Activated CD4-positive, alpha-beta T cell treated with anti-CD3 and anti-CD28 coated beads, Interleukin-2, amount 10 ng/mL, durations not matched to agents 24 days and 14 days (primary cell): ENCODE measurements at regions of chr15 and their contacts with region 1.

Region 1: DNA sequence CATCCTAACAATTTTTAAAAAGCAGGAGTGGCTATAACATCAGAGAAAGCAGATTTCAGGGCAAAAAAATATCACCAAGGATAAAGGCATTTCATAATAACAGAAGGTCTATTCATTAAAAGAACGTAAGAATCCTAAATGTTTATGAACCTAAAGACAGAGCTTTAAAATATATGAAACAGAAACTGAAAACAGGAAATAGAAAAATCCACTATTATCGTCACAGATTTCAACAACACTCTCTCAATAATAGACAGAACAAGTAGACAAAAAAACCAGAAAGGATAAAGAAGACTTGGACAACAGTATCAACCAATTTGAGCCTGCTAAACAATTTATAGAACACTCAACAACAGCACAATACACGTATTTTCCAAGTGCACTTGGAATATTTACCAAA is 71.4 kb downstream of the FBXL22 start:
- DNase-seq: no peak
- H3K4me3 Mint-ChIP-seq: peak overlapping the region; percentile 80
- H3K27ac Mint-ChIP-seq: peak overlapping the region; percentile 81
- H3K4me1 Mint-ChIP-seq: peaks cover 43% of the 10 kb centered on the region
- H3K27me3 Mint-ChIP-seq: no peaks in the 10 kb centered on the region

Region 2: DNA sequence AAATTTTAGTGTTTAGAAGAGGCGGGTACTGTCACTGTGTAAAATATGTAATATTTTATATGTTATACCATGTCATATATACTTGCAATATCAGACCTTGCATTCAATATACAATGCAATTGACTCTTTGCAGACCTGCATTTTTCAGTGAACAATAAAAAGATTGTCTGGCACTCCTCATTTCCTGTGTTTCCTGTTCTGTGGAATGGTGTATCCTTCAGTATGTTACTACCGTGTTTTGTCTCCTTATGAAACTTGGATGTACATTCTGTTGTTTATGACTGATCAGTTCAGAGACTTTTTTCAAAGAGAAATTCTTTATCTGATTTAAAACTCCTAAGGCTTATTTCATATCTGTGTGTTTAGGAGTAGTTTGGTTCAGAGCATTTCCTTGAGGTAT is 359.7 kb before region 1 on chr15:
- intact Hi-C with region 1: no loop called
- DNase-seq: no peak
- H3K4me3 Mint-ChIP-seq: no peak overlapping the region
- H3K27ac Mint-ChIP-seq: no peak overlapping the region
- H3K4me1 Mint-ChIP-seq: no peaks in the 10 kb centered on the region
- H3K27me3 Mint-ChIP-seq: peaks cover 5% of the 10 kb centered on the region

Region 3: GRCh38 chr15:63466378-63467192 is 202.0 kb before region 1 on chr15:
- intact Hi-C with region 1: loop called (anchors 5 kb)
- DNase-seq: peak; percentile 91
- H3K4me3 Mint-ChIP-seq: no peak overlapping the region
- H3K27ac Mint-ChIP-seq: no peak overlapping the region
- H3K4me1 Mint-ChIP-seq: peaks cover 23% of the 10 kb centered on the region
- H3K27me3 Mint-ChIP-seq: peaks cover 13% of the 10 kb centered on the region

Region 4: DNA sequence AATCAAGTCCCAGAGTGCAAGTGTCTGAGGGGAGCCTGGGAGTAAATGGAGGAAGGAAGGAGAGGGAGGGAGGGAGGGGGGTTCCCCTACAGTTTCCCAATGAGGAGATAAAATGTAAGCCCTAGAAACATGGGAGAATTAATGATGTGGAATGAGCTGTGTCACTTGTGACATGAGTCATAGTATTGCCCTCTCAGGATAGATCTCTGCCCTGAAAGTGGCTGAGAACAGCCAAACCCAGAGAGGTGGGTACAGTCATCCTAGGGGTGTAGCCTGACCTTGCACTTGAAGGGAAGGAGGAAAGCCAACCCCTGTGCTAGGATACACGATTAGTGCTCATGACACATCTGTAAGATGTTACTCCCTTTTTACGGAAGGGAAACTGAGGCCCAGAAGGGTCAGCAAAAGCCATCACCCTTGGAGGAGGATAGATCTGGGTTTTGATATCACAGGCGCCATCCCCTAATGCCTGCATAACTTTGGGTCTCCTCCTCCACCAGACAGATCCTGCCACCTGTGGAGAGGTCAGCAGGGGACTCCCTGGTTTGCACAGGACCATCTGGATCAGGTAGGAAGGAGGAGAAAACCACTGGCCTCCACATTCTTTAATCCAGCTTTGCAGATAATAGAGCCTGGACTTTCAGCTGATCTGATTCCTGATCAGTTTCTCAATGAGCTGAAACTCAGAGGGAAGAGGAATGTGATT is 187.3 kb before region 1 on chr15:
- intact Hi-C with region 1: loop called (anchors 5 kb)
- DNase-seq: no peak
- H3K4me3 Mint-ChIP-seq: peak overlapping the region; percentile 26
- H3K27ac Mint-ChIP-seq: peak overlapping the region; percentile 97
- H3K4me1 Mint-ChIP-seq: peaks cover 61% of the 10 kb centered on the region
- H3K27me3 Mint-ChIP-seq: no peaks in the 10 kb centered on the region

Region 5: GRCh38 chr15:63610200-63610841 is 58.3 kb before region 1 on chr15:
- intact Hi-C with region 1: loop called (anchors 5 kb)
- DNase-seq: peak; percentile 93
- H3K4me3 Mint-ChIP-seq: peak overlapping the region; percentile 32
- H3K27ac Mint-ChIP-seq: peak overlapping the region; percentile 92
- H3K4me1 Mint-ChIP-seq: peaks cover 27% of the 10 kb centered on the region
- H3K27me3 Mint-ChIP-seq: no peaks in the 10 kb centered on the region

Region 6: GRCh38 chr15:63638839-63639238 is 29.8 kb before region 1 on chr15:
- intact Hi-C with region 1: loop called (anchors 2 kb)
- DNase-seq: no peak
- H3K4me3 Mint-ChIP-seq: no peak overlapping the region
- H3K27ac Mint-ChIP-seq: no peak overlapping the region
- H3K4me1 Mint-ChIP-seq: peaks cover 11% of the 10 kb centered on the region
- H3K27me3 Mint-ChIP-seq: no peaks in the 10 kb centered on the region

Region 7: GRCh38 chr15:63694184-63694583 is 25.6 kb after region 1 on chr15:
- intact Hi-C with region 1: no loop called
- DNase-seq: no peak
- H3K4me3 Mint-ChIP-seq: no peak overlapping the region
- H3K27ac Mint-ChIP-seq: no peak overlapping the region
- H3K4me1 Mint-ChIP-seq: no peaks in the 10 kb centered on the region
- H3K27me3 Mint-ChIP-seq: no peaks in the 10 kb centered on the region